ENCODE measurements at regions of chr20 and their contacts with region 1.

Region 1: DNA sequence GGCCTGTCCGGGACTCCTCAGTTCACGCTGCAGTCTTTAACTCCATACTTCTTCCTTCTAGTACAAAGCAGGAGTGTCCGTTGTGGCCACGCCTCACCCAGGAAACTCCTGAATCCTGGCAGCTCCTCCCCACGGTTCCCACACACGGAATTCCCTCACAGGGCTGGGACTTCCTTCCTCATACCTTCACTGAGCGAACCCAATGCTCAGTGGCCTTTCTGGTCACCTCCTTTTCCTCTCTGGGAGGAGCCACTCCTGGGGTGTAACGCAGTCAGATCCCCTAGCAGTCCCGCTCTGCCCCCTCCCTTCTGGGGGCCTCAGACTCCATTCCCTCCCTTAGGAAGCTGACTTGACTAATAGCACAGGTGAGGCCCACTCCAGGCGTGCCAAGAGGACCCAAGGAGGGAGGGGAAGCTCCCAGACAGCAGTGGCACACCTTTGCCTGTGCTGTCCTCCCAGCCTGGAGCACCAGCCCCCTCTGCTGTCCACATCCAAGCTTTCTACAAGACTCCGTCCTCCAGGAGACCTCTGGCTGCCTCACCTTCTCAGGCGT is at the start of gene SLC52A3:
- DNase-seq: peak; percentile 96
- ATAC-seq: peak; percentile 94
- H3K4me3 ChIP-seq: peak within 1 kb of the TSS; percentile 75
- H3K27ac ChIP-seq: peak within 1 kb of the TSS; percentile 71
- H3K4me1 ChIP-seq: peaks cover 13% of the 10 kb centered on the region
- H3K27me3 ChIP-seq: no peaks in the 10 kb centered on the region
- CTCF ChIP-seq: peak; percentile 92
- total RNA-seq, gene SLC52A3: 4.2 and 5.9 TPM in 2 replicates

Region 2: GRCh38 chr20:634556-634955 is 133.9 kb before region 1 on chr20:
- CTCF ChIA-PET with region 1: no interaction called
- POLR2A ChIA-PET with region 1: no interaction called
- intact Hi-C with region 1: no loop called
- DNase-seq: no peak
- ATAC-seq: no peak
- H3K4me3 ChIP-seq: no peak overlapping the region
- H3K27ac ChIP-seq: no peak overlapping the region
- H3K4me1 ChIP-seq: no peaks in the 10 kb centered on the region
- H3K27me3 ChIP-seq: peaks cover 27% of the 10 kb centered on the region; the same call in 1 of the 2 replicates
- CTCF ChIP-seq: no peak

Region 3: GRCh38 chr20:739736-740135 is 28.8 kb before region 1 on chr20:
- CTCF ChIA-PET with region 1: interaction called, 11 read pairs
- POLR2A ChIA-PET with region 1: no interaction called
- intact Hi-C with region 1: loop called (anchors 1 kb)
- DNase-seq: no peak
- ATAC-seq: no peak
- H3K4me3 ChIP-seq: no peak overlapping the region
- H3K27ac ChIP-seq: no peak overlapping the region
- H3K4me1 ChIP-seq: peaks cover 7% of the 10 kb centered on the region
- H3K27me3 ChIP-seq: no peaks in the 10 kb centered on the region
- CTCF ChIP-seq: no peak

Region 4: GRCh38 chr20:755941-756340 is 12.6 kb before region 1 on chr20:
- CTCF ChIA-PET with region 1: no interaction called
- POLR2A ChIA-PET with region 1: no interaction called
- intact Hi-C with region 1: no loop called
- DNase-seq: no peak
- ATAC-seq: no peak
- H3K4me3 ChIP-seq: no peak overlapping the region
- H3K27ac ChIP-seq: no peak overlapping the region
- H3K4me1 ChIP-seq: peaks cover 5% of the 10 kb centered on the region; the same call in 1 of the 2 replicates
- H3K27me3 ChIP-seq: no peaks in the 10 kb centered on the region
- CTCF ChIP-seq: no peak

Measured in PC-3 (cell line).